PC-9 (cell line): ENCODE measurements at regions of chr1 and their contacts with region 1.

Region 1: DNA sequence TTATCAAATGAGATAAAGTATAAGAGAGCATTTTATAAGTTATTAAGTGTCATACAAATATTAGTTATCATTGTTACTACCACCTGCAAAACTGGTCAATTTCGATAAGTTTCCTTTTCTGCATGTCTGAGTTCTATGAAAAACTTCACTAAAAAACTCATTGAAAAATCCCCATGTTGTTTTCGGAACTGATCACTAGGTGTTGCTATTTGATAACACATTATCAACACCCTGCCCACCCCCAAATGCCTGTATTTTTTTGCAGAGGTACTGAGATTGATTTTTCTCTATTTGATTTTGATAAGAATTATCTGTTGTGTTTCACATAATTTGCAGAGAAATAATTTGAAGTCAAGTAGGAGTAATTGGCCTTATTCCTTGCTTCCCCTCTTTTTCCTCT is 22.1 kb upstream of the DISP1 start:
- DNase-seq: no peak
- H3K4me3 ChIP-seq: no peak overlapping the region
- H3K27ac ChIP-seq: no peak overlapping the region
- H3K4me1 ChIP-seq: no peaks in the 10 kb centered on the region
- H3K27me3 ChIP-seq: peaks cover 25% of the 10 kb centered on the region; the same call in 1 of the 2 replicates
- CTCF ChIP-seq: peak; percentile 76

Region 2: DNA sequence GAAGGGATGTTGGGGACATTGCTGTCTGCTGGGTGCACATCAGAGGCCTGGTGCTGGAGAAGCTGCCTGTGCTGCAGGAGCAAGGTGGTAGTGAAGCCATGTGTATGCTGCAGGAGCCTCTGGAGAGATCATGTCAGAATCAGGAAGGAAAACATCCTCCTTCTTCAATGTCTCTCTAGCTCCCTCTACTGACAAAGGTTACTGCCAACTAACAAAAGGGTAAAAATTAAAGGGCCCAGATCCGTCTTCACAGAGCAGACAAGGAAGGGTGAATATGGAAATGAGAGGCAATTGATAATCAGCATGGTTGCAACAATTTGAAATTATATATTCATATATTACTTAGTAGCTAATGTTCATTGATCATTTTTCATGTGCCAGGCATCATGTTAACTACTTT is 23.6 kb before region 1 on chr1:
- CTCF ChIA-PET with region 1: no interaction called
- POLR2A ChIA-PET with region 1: no interaction called
- intact Hi-C with region 1: no loop called
- DNase-seq: no peak
- H3K4me3 ChIP-seq: no peak overlapping the region
- H3K27ac ChIP-seq: no peak overlapping the region
- H3K4me1 ChIP-seq: no peaks in the 10 kb centered on the region
- H3K27me3 ChIP-seq: peaks cover 39% of the 10 kb centered on the region
- CTCF ChIP-seq: peak; percentile 43

Region 3: DNA sequence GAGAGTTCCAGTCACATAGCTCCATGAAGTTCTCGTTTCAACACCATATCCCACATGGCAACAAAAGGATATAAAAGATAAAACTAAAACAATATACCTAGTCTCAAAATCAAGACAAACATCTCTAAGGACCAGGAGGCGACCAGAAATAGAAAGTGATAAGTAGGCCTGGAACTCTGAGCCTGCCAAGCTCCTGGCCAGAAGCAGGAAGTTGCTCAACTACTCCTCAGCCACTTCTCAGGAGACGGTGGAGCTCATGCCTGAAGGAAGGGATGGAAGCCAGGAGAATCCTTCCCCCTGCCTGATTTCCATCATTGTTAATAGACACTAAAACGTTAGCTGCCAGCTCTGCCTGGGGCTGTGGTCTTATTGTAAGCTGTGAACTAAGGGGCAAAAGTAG is 116.8 kb after region 1 on chr1:
- CTCF ChIA-PET with region 1: no interaction called
- POLR2A ChIA-PET with region 1: no interaction called
- intact Hi-C with region 1: no loop called
- DNase-seq: no peak
- H3K4me3 ChIP-seq: no peak overlapping the region
- H3K27ac ChIP-seq: no peak overlapping the region
- H3K4me1 ChIP-seq: peaks cover 9% of the 10 kb centered on the region; the same call in 1 of the 2 replicates
- H3K27me3 ChIP-seq: no peaks in the 10 kb centered on the region
- CTCF ChIP-seq: no peak

Region 4: GRCh38 chr1:222974496-222974895 is 181.8 kb after region 1 on chr1:
- CTCF ChIA-PET with region 1: interaction called, 11 read pairs
- POLR2A ChIA-PET with region 1: no interaction called
- intact Hi-C with region 1: no loop called
- DNase-seq: no peak
- H3K4me3 ChIP-seq: no peak overlapping the region
- H3K27ac ChIP-seq: no peak overlapping the region
- H3K4me1 ChIP-seq: no peaks in the 10 kb centered on the region
- H3K27me3 ChIP-seq: no peaks in the 10 kb centered on the region
- CTCF ChIP-seq: no peak

Region 5: GRCh38 chr1:222994506-222995235 is 201.9 kb after region 1 on chr1:
- CTCF ChIA-PET with region 1: no interaction called
- POLR2A ChIA-PET with region 1: no interaction called
- intact Hi-C with region 1: loop called (anchors 5 kb)
- DNase-seq: peak in 1 of 2 experiments; percentile 66
- H3K4me3 ChIP-seq: no peak overlapping the region
- H3K27ac ChIP-seq: peak overlapping the region; percentile 76
- H3K4me1 ChIP-seq: peaks cover 37% of the 10 kb centered on the region
- H3K27me3 ChIP-seq: no peaks in the 10 kb centered on the region
- CTCF ChIP-seq: no peak

Region 6: DNA sequence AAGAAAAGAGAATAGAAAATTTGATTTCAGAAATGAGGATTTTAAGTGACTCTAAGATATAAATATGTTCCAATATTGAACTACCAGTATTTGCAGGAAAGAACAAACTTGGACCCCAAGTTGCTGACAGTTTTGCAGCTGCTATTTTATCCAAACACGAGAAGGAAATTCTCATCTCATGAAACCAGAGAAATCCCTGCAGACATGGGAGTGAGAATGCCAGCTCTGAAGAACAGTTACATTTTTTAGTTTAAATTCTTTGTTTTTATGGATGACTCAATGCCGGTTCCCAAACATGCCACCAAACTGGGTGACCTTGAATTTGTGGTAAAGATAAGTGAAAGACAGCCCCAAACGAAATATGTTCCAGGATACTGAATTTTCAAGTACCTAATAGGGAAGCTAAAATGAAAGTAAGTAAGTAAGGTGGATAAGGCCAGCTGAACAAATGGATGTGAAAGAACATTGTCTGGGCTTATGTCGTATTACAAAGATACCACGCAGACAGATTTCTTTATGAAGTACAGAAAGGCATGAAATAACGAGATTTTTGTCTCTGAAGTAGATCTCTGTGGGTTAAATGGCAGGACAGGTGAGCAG is 330.4 kb after region 1 on chr1:
- CTCF ChIA-PET with region 1: interaction called, 3 read pairs
- POLR2A ChIA-PET with region 1: interaction called, 10 read pairs
- intact Hi-C with region 1: loop called (anchors 1 kb)
- DNase-seq: no peak
- H3K4me3 ChIP-seq: peak overlapping the region; percentile 16; the same call in 1 of the 2 replicates
- H3K27ac ChIP-seq: no peak overlapping the region
- H3K4me1 ChIP-seq: peaks cover 43% of the 10 kb centered on the region
- H3K27me3 ChIP-seq: no peaks in the 10 kb centered on the region
- CTCF ChIP-seq: no peak

Region 7: DNA sequence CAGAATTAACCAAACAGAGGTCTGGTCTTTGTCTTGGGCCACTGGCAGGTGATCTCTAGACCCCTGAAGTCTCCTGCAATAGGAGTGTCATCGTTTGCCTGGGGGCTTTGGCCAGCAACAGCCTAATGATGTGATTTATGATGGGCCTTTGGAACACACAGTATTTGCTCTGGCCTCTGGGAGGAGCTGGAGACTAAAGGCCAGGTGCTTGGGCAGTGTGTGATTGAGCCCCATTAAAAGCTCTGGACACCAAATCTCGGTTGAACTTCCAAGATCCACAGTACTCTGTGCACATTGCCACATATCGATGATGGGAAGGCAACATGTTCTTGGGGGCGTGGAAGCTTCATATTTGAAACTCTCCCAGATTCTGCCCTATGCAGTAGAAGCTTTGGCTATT is 382.3 kb after region 1 on chr1:
- CTCF ChIA-PET with region 1: no interaction called
- POLR2A ChIA-PET with region 1: no interaction called
- intact Hi-C with region 1: no loop called
- DNase-seq: no peak
- H3K4me3 ChIP-seq: no peak overlapping the region
- H3K27ac ChIP-seq: no peak overlapping the region
- H3K4me1 ChIP-seq: peaks cover 16% of the 10 kb centered on the region
- H3K27me3 ChIP-seq: no peaks in the 10 kb centered on the region
- CTCF ChIP-seq: peak; percentile 50

Region 8: GRCh38 chr1:223244366-223245103 is 451.8 kb after region 1 on chr1:
- CTCF ChIA-PET with region 1: no interaction called
- POLR2A ChIA-PET with region 1: no interaction called
- intact Hi-C with region 1: loop called (anchors 10 kb)
- DNase-seq: peak; percentile 23 to 48
- H3K4me3 ChIP-seq: no peak overlapping the region
- H3K27ac ChIP-seq: no peak overlapping the region
- H3K4me1 ChIP-seq: peaks cover 10% of the 10 kb centered on the region; the same call in 1 of the 2 replicates
- H3K27me3 ChIP-seq: no peaks in the 10 kb centered on the region
- CTCF ChIP-seq: peak; percentile 44